ENCODE measurements at regions of chr5 and their contacts with region 1.

Region 1: GRCh38 chr5:172443441-172444109 is 10.8 kb downstream of the SH3PXD2B start:
- DNase-seq: peak; percentile 96

Region 2: DNA sequence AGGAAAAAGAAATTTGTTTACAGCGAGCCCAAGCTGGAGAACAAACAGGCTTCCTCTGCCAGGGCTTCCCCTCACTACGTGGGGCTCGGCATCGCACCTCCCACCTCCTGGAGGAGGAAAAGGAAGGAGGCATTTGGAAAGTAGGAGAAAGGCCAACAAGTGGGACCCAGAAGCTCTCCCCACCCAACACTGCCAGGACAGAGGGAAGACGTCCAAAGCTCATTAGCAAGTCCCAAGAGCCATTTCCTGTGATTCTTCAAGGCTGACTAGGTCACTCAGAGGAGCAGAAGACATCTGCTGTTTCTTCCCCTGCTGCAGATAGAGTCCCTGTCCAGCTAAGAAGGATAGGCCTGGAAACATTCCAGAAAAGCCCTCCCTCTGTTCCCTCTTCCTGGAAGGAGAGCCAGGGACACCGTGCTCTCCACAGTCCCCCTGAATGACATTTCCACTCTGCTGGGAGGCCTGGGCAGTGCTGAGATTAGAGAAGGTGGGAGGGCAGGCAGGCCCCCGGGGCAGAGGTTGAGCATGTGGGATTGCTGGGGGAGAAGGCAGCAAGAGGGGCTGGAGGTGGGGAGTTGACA is 140.4 kb after region 1 on chr5:
- intact Hi-C with region 1: no loop called
- DNase-seq: no peak

Region 3: GRCh38 chr5:173477345-173478040 is 1033.9 kb after region 1 on chr5:
- intact Hi-C with region 1: loop called in 1 of 2 experiments (anchors 5 kb)
- DNase-seq: peak; percentile 86